AG04449 (cell line): ENCODE measurements at regions of chr19 and their contacts with region 1.

Region 1: GRCh38 chr19:12064590-12065538 is at the start of gene ZNF844:
- DNase-seq: no peak
- H3K4me3 ChIP-seq: peak within 1 kb of the TSS; percentile 94
- CTCF ChIP-seq: no peak

Region 2: DNA sequence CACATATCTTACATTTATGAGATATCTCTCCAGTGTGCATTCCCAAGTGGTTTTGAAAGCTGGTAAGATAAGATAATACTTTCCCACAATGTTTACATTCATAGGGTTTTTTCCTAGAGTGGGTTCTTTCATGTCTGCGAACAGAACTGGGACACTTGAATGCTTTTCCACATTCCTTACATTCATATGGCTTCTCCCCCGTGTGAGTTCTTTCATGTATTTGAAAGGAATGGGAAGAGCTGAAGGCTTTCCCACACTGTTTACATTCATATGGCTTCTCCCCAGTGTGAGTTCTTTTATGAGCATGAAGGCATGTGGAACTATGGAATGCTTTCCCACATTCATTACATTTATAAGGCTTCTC is 49.1 kb before region 1 on chr19:
- CTCF ChIA-PET with region 1: interaction called, 10 read pairs
- POLR2A ChIA-PET with region 1: no interaction called
- DNase-seq: no peak
- H3K4me3 ChIP-seq: no peak overlapping the region
- CTCF ChIP-seq: no peak

Region 3: GRCh38 chr19:12035220-12036153 is 29.4 kb before region 1 on chr19 and contains the start of gene ZNF433:
- CTCF ChIA-PET with region 1: interaction called, 33 read pairs
- POLR2A ChIA-PET with region 1: no interaction called
- DNase-seq: peak; percentile 19
- H3K4me3 ChIP-seq: peak within 1 kb of the TSS; percentile 96
- CTCF ChIP-seq: no peak

Region 4: DNA sequence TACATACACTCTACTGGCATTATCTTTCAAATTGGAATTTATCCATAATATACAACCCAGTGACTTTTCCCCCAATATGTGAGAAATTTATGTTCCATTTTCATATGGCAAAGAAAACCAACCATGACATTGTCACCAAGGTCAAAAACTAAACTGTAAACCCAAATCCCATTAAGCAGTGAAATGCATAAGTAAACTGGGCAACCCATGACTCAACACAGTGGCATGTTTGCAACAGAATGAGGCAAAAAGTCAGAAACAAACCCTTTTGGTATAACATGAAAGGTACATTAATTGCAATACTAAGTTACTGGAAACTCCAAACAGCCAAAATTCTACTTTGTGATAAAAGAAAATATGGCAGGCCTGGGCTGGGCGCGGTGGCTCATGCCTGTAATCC is 17.0 kb before region 1 on chr19:
- CTCF ChIA-PET with region 1: interaction called, 24 read pairs
- POLR2A ChIA-PET with region 1: interaction called, 4 read pairs
- DNase-seq: no peak
- H3K4me3 ChIP-seq: no peak overlapping the region
- CTCF ChIP-seq: no peak

Region 5: GRCh38 chr19:12075538-12076139 is 10.8 kb after region 1 on chr19:
- CTCF ChIA-PET with region 1: interaction called, 14 read pairs
- POLR2A ChIA-PET with region 1: no interaction called
- DNase-seq: no peak
- H3K4me3 ChIP-seq: no peak overlapping the region
- CTCF ChIP-seq: no peak

Region 6: GRCh38 chr19:12145348-12145747 is 80.5 kb after region 1 on chr19:
- CTCF ChIA-PET with region 1: interaction called, 54 read pairs
- POLR2A ChIA-PET with region 1: interaction called, 6 read pairs
- DNase-seq: no peak
- H3K4me3 ChIP-seq: no peak overlapping the region
- CTCF ChIP-seq: no peak